Panc1 (cell line): ENCODE measurements at regions of chr11 and their contacts with region 1.

Region 1: DNA sequence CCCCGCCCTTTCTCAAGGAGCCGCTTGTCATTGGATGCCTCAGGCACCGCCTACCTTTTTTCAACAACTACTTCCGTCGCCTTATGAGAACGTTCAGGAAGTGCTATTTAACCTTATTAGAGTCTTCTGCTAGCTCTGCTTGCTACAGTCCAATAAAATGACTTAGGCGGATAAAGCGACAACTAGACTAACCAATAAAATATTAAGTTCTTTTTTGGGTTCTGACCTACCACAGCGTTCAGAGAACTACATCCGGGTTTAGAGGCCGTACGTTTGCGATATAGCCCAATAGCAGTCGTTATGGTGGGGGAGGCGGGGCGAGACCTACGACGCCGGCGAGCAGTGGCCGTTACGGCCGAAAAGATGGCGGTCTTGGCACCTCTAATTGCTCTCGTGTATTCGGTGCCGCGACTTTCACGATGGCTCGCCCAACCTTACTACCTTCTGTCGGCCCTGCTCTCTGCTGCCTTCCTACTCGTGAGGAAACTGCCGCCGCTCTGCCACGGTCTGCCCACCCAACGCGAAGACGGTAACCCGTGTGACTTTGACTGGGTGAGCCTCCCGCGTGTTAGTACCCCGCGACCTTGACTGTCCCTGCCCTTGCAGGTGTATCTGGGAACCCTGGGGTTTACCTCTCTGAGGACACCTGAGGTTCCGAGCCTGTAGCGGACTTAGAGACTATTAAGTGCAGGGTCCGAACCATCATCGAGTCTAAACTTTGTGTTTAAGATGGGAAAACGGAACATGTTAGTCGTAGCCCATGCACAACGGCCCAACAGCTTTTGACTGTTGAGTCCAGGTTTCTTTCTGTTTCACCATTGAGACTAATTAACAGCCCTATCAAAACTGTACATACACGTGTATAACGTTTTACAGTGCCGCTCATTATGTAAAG is at the start of gene TMX2:
- DNase-seq: peak; percentile 97
- ATAC-seq: peak; percentile 94
- H3K4me3 ChIP-seq: peak within 1 kb of the TSS; percentile 98
- H3K27ac ChIP-seq: peak within 1 kb of the TSS; percentile 95
- H3K4me1 ChIP-seq: peaks cover 17% of the 10 kb centered on the region; the same call in 1 of the 2 replicates
- H3K27me3 ChIP-seq: no peaks in the 10 kb centered on the region
- CTCF ChIP-seq: no peak
- total RNA-seq, gene TMX2: 151 TPM

Region 2: DNA sequence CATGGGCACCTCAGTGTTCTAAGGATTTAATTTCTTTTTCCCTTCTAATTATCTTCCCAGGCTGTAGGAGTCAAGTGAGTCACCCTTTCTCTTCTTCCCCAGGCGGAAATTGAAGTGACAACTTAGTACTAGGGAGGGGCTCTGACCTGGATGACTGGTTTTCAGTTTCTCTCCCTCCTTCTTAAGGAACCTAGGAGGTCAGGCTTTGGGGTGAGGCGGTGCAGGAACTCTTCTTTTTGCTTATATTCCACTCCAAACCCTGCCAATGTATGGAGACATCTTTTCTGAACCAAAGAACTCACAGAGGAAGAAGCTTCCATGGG is 32.0 kb before region 1 on chr11:
- CTCF ChIA-PET with region 1: no interaction called
- POLR2A ChIA-PET with region 1: interaction called, 11 read pairs
- in situ Hi-C with region 1: no loop called
- intact Hi-C with region 1: no loop called
- DNase-seq: no peak
- ATAC-seq: no peak
- H3K4me3 ChIP-seq: no peak overlapping the region
- H3K27ac ChIP-seq: no peak overlapping the region
- H3K4me1 ChIP-seq: no peaks in the 10 kb centered on the region
- H3K27me3 ChIP-seq: no peaks in the 10 kb centered on the region
- CTCF ChIP-seq: no peak

Region 3: GRCh38 chr11:57698843-57699365 is 13.6 kb before region 1 on chr11:
- CTCF ChIA-PET with region 1: no interaction called
- POLR2A ChIA-PET with region 1: interaction called, 10 read pairs
- in situ Hi-C with region 1: no loop called
- intact Hi-C with region 1: no loop called
- DNase-seq: no peak
- ATAC-seq: no peak
- H3K4me3 ChIP-seq: no peak overlapping the region
- H3K27ac ChIP-seq: no peak overlapping the region
- H3K4me1 ChIP-seq: no peaks in the 10 kb centered on the region
- H3K27me3 ChIP-seq: no peaks in the 10 kb centered on the region
- CTCF ChIP-seq: no peak